Activated CD8-positive, alpha-beta T cell treated with anti-CD3 and anti-CD28 coated beads, Interleukin-2, amount 10 ng/mL, durations not matched to agents 7 days and 5 days (primary cell): ENCODE measurements at regions of chr14 and their contacts with region 1.

Region 1: DNA sequence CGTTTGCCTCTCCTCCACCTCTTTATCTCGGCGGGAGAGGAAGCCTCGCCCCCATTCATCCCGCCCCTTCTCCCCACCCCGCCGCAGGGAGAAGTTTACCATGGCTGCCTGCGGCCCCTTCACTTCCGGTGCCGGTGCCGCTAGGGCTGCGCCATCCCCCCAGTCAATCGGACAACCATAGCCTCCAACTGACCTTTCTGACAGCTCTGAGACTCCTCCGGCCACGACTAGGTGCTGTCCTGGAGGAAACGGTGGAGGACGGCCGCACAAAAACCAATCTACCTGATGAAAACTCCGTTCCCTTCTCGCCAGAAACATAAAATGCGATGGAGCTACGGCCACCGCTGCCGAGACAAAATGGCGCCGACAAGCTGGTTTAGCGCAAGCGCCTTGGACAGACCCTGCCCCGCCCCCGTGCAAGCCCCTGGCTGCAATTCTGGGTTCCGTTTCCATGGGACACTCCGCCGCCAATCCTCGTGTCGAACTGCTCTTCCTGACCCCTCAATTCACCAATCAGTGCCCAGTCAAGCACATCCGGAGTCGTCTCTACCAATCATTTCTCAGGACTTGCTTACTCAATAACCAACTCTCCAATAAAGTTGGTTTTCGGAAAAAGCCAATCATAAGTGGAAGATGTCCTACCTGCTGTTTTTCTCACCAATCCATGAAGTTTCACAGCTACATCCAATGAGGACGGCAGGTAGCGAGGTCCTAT is 436 bp upstream of the ARID4A start:
- DNase-seq: peak; percentile 99
- ATAC-seq: peak; percentile 91
- H3K4me3 Mint-ChIP-seq: no peak overlapping the region
- H3K27ac Mint-ChIP-seq: no peak overlapping the region
- H3K4me1 Mint-ChIP-seq: peaks cover 28% of the 10 kb centered on the region
- H3K27me3 Mint-ChIP-seq: no peaks in the 10 kb centered on the region

Region 2: DNA sequence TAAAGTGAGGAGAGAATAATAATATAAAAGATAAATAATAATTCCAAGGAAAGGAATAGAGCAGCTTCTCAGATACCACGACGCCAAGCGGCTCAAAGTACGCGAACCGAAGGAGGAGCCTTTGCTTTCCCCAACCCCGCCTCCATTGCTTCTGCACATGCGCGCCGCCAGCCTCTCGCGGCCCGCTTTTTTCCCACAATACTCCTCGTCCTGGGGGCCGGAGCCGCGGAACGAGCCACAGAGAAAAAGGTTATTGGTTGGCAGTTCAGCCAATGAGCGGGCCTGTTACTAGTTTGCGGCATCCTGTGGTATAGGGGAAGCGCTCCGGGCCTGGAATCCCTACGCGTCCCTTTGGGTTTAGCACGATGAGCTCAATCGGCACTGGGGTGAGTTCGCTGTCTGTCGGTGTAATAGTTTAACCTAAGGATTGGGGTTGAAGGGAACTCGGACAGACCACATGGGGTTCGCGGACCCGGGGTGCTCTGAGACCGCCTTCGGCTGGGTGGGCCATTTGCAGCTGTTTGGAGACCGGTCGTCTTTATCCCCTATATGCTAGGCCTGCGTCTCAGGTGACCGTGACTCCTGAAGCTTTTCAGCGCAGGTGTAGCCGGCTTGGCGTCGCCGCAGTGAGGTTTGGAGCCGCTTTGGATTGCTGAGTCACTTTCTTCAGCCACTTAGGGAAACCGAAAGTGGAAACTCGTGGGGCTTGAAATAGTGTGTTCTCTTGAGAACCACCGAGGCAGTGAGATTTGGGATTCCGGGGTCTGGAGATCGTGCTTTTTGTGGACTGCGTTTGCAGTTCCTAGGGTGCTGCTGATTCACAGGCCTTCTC is 53.1 kb before region 1 on chr14 and contains the start of gene PSMA3:
- CTCF ChIA-PET with region 1: interaction called, 3 read pairs
- POLR2A ChIA-PET with region 1: interaction called, 41 read pairs
- DNase-seq: peak; percentile 98
- ATAC-seq: peak; percentile 94
- H3K4me3 Mint-ChIP-seq: peak within 1 kb of the TSS; percentile 92
- H3K27ac Mint-ChIP-seq: peak within 1 kb of the TSS; percentile 99
- H3K4me1 Mint-ChIP-seq: peaks cover 41% of the 10 kb centered on the region
- H3K27me3 Mint-ChIP-seq: no peaks in the 10 kb centered on the region
- total RNA-seq, gene PSMA3: 257 to 275 TPM

Region 3: GRCh38 chr14:58272588-58273372 is 25.1 kb before region 1 on chr14:
- CTCF ChIA-PET with region 1: interaction called, 8 read pairs
- POLR2A ChIA-PET with region 1: interaction called, 18 read pairs
- DNase-seq: no peak
- ATAC-seq: no peak
- H3K4me3 Mint-ChIP-seq: no peak overlapping the region
- H3K27ac Mint-ChIP-seq: no peak overlapping the region
- H3K4me1 Mint-ChIP-seq: peaks cover 28% of the 10 kb centered on the region
- H3K27me3 Mint-ChIP-seq: no peaks in the 10 kb centered on the region

Region 4: DNA sequence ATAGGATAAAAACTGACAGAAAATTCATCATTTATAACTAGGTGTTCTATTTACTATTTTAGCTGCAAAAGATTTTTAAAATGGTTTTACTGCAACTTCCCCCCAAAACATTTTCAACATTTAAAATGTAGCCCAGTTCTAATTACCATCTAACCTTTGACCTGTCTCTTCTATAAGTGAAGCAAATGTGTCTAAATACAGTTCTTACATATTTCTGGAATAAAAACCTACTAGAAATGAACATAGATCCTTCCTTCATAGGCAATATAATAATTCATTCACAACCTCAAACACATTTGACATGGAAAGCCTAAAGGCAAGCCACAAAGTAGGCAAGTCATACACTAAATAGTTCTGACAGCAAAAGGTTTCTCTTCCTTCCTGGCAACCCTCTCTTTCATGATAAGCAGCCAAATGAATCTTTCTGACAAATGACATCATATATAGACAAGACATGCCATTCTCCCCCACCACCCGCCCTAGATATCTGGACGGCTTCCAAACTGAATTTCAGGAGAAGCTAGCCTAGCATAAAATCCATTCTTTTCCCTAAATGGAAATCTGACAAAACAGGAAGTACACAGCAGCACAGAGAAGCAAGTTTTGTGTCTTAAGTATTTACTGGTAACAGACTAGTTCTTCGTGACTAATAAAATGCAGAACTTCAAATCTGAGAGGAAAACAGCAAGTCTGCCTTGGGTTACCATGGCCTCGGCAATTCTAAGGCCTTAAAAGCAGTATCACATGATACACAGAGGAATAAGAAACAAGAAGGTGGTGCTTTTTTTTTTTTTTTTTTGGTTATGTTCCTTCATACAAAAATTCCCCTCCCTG is 16.7 kb before region 1 on chr14:
- CTCF ChIA-PET with region 1: interaction called, 3 read pairs
- POLR2A ChIA-PET with region 1: interaction called, 18 read pairs
- DNase-seq: peak; percentile 33
- ATAC-seq: peak; percentile 77
- H3K4me3 Mint-ChIP-seq: peak overlapping the region; percentile 37
- H3K27ac Mint-ChIP-seq: peak overlapping the region; percentile 91
- H3K4me1 Mint-ChIP-seq: peaks cover 51% of the 10 kb centered on the region
- H3K27me3 Mint-ChIP-seq: no peaks in the 10 kb centered on the region

Region 5: DNA sequence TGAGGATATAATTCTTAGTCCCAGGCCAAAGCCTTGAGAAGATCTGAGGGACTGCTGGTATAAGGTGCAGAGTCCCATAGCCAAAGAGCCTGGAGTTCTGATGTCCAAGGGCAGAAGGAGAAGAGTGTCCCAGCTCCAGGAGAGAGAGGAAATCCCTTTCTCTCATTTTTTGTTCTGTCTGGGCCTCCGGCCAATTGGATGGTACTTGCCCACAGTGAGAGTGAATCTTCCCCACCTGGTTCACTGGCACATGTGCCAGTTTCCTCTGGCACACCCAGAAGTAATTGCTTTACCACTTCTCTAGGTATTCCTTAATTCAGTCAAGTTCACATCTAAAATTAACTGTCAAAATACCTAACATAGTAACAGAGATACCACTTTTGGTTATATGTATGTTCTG is 15.8 kb after region 1 on chr14:
- CTCF ChIA-PET with region 1: no interaction called
- POLR2A ChIA-PET with region 1: interaction called, 15 read pairs
- DNase-seq: no peak
- ATAC-seq: no peak
- H3K4me3 Mint-ChIP-seq: no peak overlapping the region
- H3K27ac Mint-ChIP-seq: no peak overlapping the region
- H3K4me1 Mint-ChIP-seq: no peaks in the 10 kb centered on the region
- H3K27me3 Mint-ChIP-seq: no peaks in the 10 kb centered on the region

Region 6: GRCh38 chr14:58327019-58327418 is 29.1 kb after region 1 on chr14:
- CTCF ChIA-PET with region 1: interaction called, 4 read pairs
- POLR2A ChIA-PET with region 1: interaction called, 11 read pairs
- DNase-seq: no peak
- ATAC-seq: no peak
- H3K4me3 Mint-ChIP-seq: no peak overlapping the region
- H3K27ac Mint-ChIP-seq: no peak overlapping the region
- H3K4me1 Mint-ChIP-seq: peaks cover 18% of the 10 kb centered on the region
- H3K27me3 Mint-ChIP-seq: no peaks in the 10 kb centered on the region

Region 7: GRCh38 chr14:58427281-58428117 is 129.6 kb after region 1 on chr14 and contains the starts of genes KIAA0586 and TIMM9:
- CTCF ChIA-PET with region 1: interaction called, 3 read pairs
- POLR2A ChIA-PET with region 1: interaction called, 47 read pairs
- DNase-seq: peak; percentile 98
- ATAC-seq: peak; percentile 93
- H3K4me3 Mint-ChIP-seq: peak within 1 kb of the TSS; percentile 91
- H3K27ac Mint-ChIP-seq: peak within 1 kb of the TSS; percentile 95
- H3K4me1 Mint-ChIP-seq: peaks cover 37% of the 10 kb centered on the region
- H3K27me3 Mint-ChIP-seq: no peaks in the 10 kb centered on the region
- total RNA-seq, gene KIAA0586: 24.9 to 27.0 TPM
- total RNA-seq, gene TIMM9: 34.6 to 37.7 TPM

Region 8: DNA sequence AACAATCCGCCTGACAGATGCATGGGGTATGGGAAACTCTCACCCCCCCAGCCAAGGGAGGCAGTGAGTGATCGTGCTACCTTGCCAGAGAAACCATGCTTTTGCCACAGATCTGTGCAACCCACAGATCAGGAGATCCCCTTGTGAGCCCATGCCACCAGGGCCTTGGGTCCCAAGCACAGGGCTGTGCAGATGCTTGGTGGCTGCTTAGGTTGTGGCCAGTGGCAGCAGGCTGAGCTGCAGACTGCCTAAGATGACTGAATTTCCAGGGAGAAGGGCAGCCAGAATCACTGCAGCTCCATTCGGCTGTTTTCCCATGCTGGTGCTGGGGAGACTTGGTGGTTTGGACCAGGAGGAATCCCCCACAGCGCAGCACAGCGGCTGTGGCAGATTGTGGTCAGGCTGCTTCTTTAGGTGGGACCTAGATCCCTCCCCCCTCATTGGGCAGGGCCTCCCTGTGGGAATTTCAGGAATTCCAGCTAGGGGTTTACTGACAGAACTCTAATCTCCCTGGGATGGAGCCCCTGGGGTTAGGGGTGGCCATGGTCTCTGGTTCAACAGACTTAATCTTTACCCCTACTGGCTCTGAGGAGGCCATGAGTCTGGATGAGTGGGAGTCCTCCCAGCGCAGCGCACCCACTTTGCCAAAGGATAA is 626.0 kb after region 1 on chr14:
- CTCF ChIA-PET with region 1: no interaction called
- POLR2A ChIA-PET with region 1: no interaction called
- DNase-seq: no peak
- ATAC-seq: no peak
- H3K4me3 Mint-ChIP-seq: no peak overlapping the region
- H3K27ac Mint-ChIP-seq: no peak overlapping the region
- H3K4me1 Mint-ChIP-seq: no peaks in the 10 kb centered on the region
- H3K27me3 Mint-ChIP-seq: peaks cover 10% of the 10 kb centered on the region